PC-3 (cell line): ENCODE measurements at regions of chr9 and their contacts with region 1.

Region 1: DNA sequence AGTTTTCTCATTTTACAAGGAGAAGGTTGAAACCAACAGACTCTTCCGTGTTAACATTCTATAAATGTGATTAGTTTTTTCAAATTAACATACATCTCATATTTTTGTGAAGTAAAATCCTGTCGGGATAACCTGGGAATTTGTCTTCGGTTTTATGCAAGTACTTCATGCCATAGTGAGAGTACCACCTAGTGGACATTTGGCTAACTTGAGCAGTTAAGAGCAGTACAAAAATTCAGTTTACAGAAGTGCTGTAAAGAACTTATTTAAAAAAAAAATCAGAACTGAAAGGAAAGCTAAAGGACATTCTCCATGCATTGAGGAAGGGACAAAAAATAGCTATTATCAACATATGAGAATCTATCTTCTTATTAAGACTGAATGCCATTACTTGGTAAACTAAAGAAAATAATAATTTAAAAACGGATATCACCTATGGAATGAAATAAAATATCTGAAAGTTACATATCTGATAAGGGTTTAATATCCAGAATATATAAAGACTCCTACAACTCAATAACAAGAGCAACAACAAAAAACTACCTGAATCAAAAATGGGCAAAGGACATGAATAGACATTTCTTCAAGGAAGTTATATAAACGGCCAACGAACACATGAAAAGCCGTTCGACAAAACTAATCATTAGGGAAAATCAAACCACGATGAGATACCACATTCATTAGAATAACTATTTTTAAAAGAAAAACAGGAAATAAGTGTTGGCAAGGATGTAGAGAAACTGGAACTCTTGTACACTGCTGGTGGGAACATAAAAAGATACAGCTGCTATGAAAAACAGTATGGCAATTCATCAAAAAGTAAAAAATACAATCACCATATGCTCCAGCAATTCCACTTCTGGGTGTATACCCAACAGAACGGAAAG is 117.0 kb upstream of the GNA14 start:
- DNase-seq: peak; percentile 70
- ATAC-seq: peak; percentile 48; the same call in 1 of the 2 replicates
- H3K4me3 ChIP-seq: no peak overlapping the region
- H3K27ac ChIP-seq: no peak overlapping the region
- H3K4me1 ChIP-seq: no peaks in the 10 kb centered on the region
- H3K27me3 ChIP-seq: no peaks in the 10 kb centered on the region
- CTCF ChIP-seq: peak; percentile 78

Region 2: DNA sequence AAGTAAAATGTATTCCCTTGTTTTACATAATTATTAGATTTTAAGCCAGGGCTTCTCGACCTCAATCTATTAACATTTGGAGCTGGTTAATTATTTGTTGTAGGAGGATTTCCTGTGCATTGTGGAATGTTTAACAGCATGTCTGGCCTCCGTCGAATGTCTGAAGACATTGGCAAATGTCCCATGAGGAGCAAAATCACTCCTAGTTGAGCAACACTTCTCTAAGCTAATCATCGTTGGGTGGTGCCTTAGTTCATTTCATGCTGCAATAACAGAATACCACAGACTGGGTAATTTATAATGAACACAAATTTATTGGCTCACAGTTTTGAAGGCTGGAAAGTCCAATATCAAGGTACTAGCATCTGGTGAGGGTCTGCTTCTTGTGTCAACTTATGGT is 601.3 kb before region 1 on chr9:
- CTCF ChIA-PET with region 1: no interaction called
- POLR2A ChIA-PET with region 1: no interaction called
- intact Hi-C with region 1: loop called (anchors 1 kb)
- DNase-seq: no peak
- ATAC-seq: no peak
- H3K4me3 ChIP-seq: no peak overlapping the region
- H3K27ac ChIP-seq: no peak overlapping the region
- H3K4me1 ChIP-seq: no peaks in the 10 kb centered on the region; the same call in 1 of the 2 replicates
- H3K27me3 ChIP-seq: peaks cover 12% of the 10 kb centered on the region; the same call in 1 of the 2 replicates
- CTCF ChIP-seq: no peak

Region 3: GRCh38 chr9:77433675-77434445 is 331.3 kb before region 1 on chr9:
- CTCF ChIA-PET with region 1: no interaction called
- POLR2A ChIA-PET with region 1: no interaction called
- intact Hi-C with region 1: loop called (anchors 1 kb)
- DNase-seq: peak; percentile 64
- ATAC-seq: peak; percentile 98
- H3K4me3 ChIP-seq: no peak overlapping the region
- H3K27ac ChIP-seq: no peak overlapping the region
- H3K4me1 ChIP-seq: no peaks in the 10 kb centered on the region
- H3K27me3 ChIP-seq: no peaks in the 10 kb centered on the region
- CTCF ChIP-seq: peak; percentile 94

Region 4: GRCh38 chr9:77841739-77842386 is 76.7 kb after region 1 on chr9:
- CTCF ChIA-PET with region 1: no interaction called
- POLR2A ChIA-PET with region 1: no interaction called
- intact Hi-C with region 1: loop called (anchors 10 kb)
- DNase-seq: peak; percentile 16
- ATAC-seq: no peak; the same call in none of the 2 replicates
- H3K4me3 ChIP-seq: no peak overlapping the region
- H3K27ac ChIP-seq: no peak overlapping the region
- H3K4me1 ChIP-seq: peaks cover 9% of the 10 kb centered on the region
- H3K27me3 ChIP-seq: no peaks in the 10 kb centered on the region
- CTCF ChIP-seq: peak; percentile 48; the same call in 1 of the 2 replicates